ENCODE measurements at regions of chr6 and their contacts with region 1.

Region 1: DNA sequence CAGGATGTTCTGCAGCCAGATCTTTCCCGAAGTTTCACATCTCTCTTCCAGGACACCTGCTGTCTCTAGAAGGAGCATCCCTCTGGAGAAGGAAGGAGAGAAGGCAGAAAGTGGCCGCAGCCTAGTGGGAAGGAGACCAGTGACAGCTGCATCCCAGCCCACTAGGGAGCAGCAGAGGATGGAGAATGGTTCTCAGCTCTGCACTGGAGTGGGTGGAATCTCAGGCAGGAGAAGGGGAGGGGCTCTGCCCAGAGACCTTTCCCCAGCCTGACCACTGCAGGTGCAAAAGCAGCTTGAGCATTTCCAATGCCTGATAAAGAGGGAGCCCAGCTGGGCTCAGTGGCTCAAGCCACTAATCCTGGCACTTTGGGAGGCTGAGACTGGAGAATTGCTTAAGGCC is 32.3 kb downstream of the NCR2 start:
- DNase-seq: peak; percentile 38
- H3K4me3 Mint-ChIP-seq: no peak overlapping the region
- H3K27ac Mint-ChIP-seq: no peak overlapping the region
- H3K4me1 Mint-ChIP-seq: peaks cover 20% of the 10 kb centered on the region
- H3K27me3 Mint-ChIP-seq: peaks cover 89% of the 10 kb centered on the region

Region 2: GRCh38 chr6:41306187-41306854 is 61.4 kb before region 1 on chr6:
- CTCF ChIA-PET with region 1: interaction called, 34 read pairs
- DNase-seq: peak; percentile 65
- H3K4me3 Mint-ChIP-seq: no peak overlapping the region
- H3K27ac Mint-ChIP-seq: no peak overlapping the region
- H3K4me1 Mint-ChIP-seq: peaks cover 18% of the 10 kb centered on the region
- H3K27me3 Mint-ChIP-seq: peaks cover 46% of the 10 kb centered on the region

Region 3: DNA sequence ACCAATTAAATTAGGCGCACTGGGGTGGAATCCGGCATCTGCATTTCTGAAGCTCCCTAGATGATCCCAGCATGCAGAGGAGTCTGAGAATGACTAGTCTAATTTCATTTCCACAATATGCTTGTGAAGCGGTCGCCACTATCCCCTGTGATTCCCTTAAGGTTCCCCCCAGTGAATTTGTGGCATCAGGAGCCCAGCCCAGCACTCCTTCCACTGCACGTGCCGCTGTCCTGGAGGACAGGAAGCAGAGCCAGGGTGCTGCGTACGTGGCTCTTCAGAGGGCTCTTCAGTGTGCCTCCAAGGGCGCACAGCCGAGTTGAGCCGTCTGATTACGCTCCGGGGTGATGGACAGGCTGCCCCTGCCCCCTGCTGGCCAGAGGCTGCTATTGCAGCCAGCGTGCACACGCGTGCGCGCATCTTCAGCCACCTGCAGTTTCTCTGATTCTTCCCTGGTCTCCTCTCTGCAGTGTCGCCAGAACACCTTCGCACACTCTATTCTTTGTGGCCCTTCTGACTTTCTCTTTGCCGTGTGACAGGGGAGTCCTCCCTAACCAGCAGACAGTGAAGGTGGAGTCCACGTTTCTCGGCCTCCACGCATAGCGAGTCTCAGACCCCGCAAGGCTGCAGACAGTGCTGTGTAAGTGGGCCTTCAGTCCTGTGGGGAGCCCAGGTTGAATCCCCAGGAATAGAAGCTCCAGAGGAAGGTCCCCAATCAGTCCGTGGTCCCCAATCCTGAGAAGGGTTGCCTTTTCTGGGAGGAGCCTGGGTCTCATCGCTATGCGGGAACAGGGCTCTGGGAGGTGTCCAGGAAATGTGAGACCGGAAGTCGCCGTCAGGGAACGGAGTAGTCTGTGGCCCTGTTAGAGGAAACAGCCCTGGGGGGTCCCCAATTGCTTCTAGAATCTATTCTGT is 48.8 kb before region 1 on chr6:
- CTCF ChIA-PET with region 1: interaction called, 10 read pairs
- DNase-seq: peak; percentile 89
- H3K4me3 Mint-ChIP-seq: peak overlapping the region; percentile 2
- H3K27ac Mint-ChIP-seq: no peak overlapping the region
- H3K4me1 Mint-ChIP-seq: peaks cover 24% of the 10 kb centered on the region
- H3K27me3 Mint-ChIP-seq: peaks cover 31% of the 10 kb centered on the region

Region 4: DNA sequence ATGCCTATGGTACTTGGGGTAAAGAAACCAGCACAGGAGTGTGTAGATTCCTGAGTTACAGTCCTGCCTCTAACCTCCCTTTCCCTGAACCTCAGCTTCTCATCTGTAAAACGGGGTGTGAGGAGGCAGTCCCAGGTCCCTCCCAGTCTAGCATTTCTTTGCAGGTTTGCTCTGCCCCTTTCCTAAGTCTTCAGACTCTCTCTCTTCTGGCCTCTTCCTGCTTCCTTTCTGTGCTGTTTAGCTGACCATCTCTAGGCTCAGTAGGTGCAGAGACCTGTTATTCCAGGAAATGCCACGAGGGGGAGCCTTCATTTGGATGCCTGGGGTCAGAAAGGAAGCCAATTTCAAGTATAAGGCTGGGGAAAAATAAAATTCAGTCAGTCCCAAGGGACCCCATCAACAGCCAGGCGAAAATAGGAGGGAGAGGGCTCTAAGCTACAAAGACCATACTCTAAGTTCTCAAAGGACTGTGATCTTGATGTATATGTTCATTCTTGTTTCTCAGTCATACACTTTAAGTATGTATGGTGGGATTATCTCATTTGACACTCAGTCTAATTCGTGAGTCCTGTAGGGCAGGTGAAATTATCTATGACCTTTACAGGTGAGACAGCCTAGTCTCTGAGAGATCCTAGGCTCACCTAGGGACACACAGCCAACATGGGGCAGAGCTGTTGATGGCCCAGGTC is 56.8 kb after region 1 on chr6:
- CTCF ChIA-PET with region 1: interaction called, 13 read pairs
- DNase-seq: peak; percentile 88
- H3K4me3 Mint-ChIP-seq: no peak overlapping the region
- H3K27ac Mint-ChIP-seq: no peak overlapping the region
- H3K4me1 Mint-ChIP-seq: peaks cover 9% of the 10 kb centered on the region
- H3K27me3 Mint-ChIP-seq: peaks cover 43% of the 10 kb centered on the region

Region 5: DNA sequence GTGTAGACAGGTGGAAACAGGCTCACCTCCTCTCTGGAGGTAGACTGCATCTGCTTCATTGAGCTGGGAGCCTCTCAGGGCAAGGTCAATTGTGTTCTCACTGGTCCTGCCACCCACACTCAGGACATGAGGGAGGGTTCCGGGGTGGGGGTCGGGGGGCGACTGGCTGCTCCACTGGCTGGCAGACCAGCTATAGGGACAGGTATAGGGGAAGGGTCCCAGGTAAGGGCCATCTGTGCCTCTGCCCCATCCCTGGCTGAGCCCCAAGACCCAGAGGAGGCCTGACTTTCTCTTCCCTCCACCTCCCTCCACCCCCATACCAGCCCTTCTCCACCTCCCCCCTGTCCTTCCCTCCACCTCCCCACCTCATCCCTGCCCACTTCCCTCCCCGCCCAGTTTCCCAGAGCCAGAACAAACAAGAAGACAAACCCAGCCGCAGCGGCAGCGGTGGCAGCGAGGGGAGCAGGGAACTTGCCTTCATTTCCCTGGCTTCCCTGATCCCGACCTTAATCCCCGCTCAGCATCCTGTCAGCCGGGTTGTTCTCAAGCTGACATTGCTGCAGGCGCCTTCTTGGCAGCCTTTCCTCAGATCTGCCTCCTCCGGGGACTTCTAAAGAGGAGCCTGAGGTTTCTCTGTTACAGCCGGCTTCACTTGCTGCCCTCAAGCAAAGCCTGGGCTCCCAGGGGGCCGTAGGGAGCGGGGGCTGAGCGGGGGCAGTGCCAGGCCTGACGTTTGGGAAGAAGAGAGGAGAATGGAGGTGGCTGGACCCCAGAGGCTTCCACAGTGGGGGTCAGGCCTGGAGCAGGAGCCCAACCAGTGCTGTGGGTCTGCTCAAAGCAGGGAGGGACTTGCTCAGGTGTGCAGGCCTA is 160.3 kb after region 1 on chr6:
- CTCF ChIA-PET with region 1: no interaction called
- DNase-seq: no peak
- H3K4me3 Mint-ChIP-seq: no peak overlapping the region
- H3K27ac Mint-ChIP-seq: no peak overlapping the region
- H3K4me1 Mint-ChIP-seq: peaks cover 36% of the 10 kb centered on the region
- H3K27me3 Mint-ChIP-seq: peaks cover 96% of the 10 kb centered on the region

Region 6: DNA sequence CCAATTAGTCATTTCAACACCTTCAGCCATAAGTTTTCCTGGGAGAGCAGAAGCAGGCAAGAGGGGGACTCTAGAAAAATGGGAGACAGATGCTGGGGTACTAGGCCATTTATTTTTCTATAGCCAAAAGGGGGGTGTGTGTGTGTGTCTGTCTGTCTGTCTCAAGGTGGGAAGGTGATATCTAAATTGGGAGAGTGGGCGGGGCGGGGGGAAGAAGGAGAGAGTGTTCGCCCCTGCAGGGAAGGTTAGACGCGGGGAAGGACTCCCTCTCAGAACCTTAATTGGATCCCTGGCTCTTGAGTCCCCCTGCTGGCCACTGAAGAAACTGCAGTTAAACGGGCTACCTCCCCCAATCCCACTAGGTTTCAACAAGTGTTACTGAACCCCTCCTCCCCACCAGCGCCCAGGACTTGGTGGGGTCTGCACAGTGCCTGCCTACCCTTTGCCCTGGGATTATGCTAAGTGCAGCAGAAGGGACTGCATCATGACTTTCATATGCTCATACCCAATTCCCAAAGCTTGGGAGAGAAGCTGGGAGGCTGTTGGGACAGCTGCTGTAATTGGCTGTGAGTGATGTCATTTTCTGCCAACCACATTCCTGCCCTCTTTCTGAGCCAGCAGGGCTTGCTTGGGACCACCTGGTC is 224.3 kb after region 1 on chr6:
- CTCF ChIA-PET with region 1: interaction called, 95 read pairs
- DNase-seq: peak; percentile 85
- H3K4me3 Mint-ChIP-seq: no peak overlapping the region
- H3K27ac Mint-ChIP-seq: no peak overlapping the region
- H3K4me1 Mint-ChIP-seq: no peaks in the 10 kb centered on the region
- H3K27me3 Mint-ChIP-seq: peaks cover 3% of the 10 kb centered on the region

Region 7: GRCh38 chr6:41602864-41603608 is 235.3 kb after region 1 on chr6:
- CTCF ChIA-PET with region 1: interaction called, 13 read pairs
- DNase-seq: peak; percentile 83
- H3K4me3 Mint-ChIP-seq: no peak overlapping the region
- H3K27ac Mint-ChIP-seq: no peak overlapping the region
- H3K4me1 Mint-ChIP-seq: peaks cover 2% of the 10 kb centered on the region
- H3K27me3 Mint-ChIP-seq: peaks cover 29% of the 10 kb centered on the region

Region 8: GRCh38 chr6:41683510-41684310 is 316.0 kb after region 1 on chr6:
- CTCF ChIA-PET with region 1: interaction called, 47 read pairs
- DNase-seq: peak; percentile 84
- H3K4me3 Mint-ChIP-seq: peak overlapping the region; percentile 65
- H3K27ac Mint-ChIP-seq: peak overlapping the region; percentile 70
- H3K4me1 Mint-ChIP-seq: peaks cover 19% of the 10 kb centered on the region
- H3K27me3 Mint-ChIP-seq: peaks cover 33% of the 10 kb centered on the region

Measured in activated naive CD4-positive, alpha-beta T cell treated with anti-CD3 and anti-CD28 coated beads, Interleukin-2, amount 10 ng/mL, durations not matched to agents 7 days and 5 days (primary cell).